CD8-positive, alpha-beta T cell (primary cell): ENCODE measurements at regions of chr10 and their contacts with region 1.

Region 1: GRCh38 chr10:102743588-102744373 is at the start of gene WBP1L:
- DNase-seq: peak; percentile 90 to 99 (median 95)
- ATAC-seq: peak; percentile 96
- H3K4me3 ChIP-seq: peak within 1 kb of the TSS; percentile 87 to 99
- H3K4me3 Mint-ChIP-seq: peak within 1 kb of the TSS; percentile 92
- H3K27ac ChIP-seq: peak within 1 kb of the TSS; percentile 64 to 91
- H3K27ac Mint-ChIP-seq: peak within 1 kb of the TSS; percentile 90
- H3K4me1 ChIP-seq: peaks cover 34% of the 10 kb centered on the region
- H3K4me1 Mint-ChIP-seq: peaks cover 50% of the 10 kb centered on the region
- H3K27me3 ChIP-seq: no peaks in the 10 kb centered on the region
- H3K27me3 Mint-ChIP-seq: no peaks in the 10 kb centered on the region
- CTCF ChIP-seq: no peak
- total RNA-seq, gene WBP1L: 5.5 to 5.9 TPM

Region 2: DNA sequence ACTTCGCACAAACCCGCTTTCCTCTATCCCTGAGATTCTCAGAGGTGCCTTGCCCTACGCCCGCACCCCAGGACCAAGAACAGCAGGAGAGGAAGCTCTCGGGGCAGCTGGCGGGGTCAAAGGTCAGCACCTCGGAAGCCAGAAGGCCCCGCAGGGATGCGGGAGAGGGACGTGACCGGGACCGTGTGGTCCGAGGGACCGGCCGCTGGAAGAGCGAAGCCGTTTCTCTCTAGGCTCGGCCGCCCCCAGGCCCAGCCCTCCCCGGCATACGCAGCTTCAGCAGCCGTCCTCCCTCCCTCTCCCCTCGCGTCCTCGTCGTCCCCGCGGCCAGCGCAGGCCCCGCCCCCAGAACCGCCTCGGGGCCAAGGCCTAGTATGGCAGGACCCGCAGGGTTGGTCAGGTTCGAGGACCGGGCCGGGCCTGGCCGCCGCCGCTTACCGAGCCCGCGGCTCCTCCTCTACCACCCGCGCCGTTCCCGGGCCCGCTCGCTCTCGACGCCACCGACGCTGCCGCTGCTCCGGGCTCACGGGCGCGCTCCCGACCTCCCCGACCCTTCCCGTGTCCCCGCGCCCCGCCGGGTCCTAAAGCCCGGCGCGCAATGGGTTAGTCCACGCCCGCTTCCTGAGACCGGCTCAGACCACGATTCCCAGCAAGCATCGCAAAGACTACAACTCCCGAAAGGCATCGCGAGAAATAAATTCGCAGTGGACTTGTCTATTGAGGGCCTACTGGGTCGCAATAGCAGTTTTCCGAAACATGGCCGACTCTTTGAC is 687.9 kb before region 1 on chr10 and contains the start of gene ARMH3:
- CTCF ChIA-PET with region 1: no interaction called
- POLR2A ChIA-PET with region 1: no interaction called
- intact Hi-C with region 1: loop called in 1 of 2 experiments (anchors 5 kb)
- DNase-seq: peak; percentile 75 to 95 (median 87)
- ATAC-seq: peak; percentile 93
- H3K4me3 ChIP-seq: peak within 1 kb of the TSS; percentile 93 to 94
- H3K4me3 Mint-ChIP-seq: peak within 1 kb of the TSS; percentile 97
- H3K27ac ChIP-seq: peak within 1 kb of the TSS; percentile 79 to 90
- H3K27ac Mint-ChIP-seq: peak within 1 kb of the TSS; percentile 95
- H3K4me1 ChIP-seq: peaks cover 40% of the 10 kb centered on the region
- H3K4me1 Mint-ChIP-seq: peaks cover 42% of the 10 kb centered on the region
- H3K27me3 ChIP-seq: no peaks in the 10 kb centered on the region
- H3K27me3 Mint-ChIP-seq: no peaks in the 10 kb centered on the region
- CTCF ChIP-seq: no peak
- total RNA-seq, gene ARMH3: 18.6 to 20.6 TPM

Region 3: GRCh38 chr10:102245101-102245931 is 498.5 kb before region 1 on chr10 and contains the start of gene GBF1:
- CTCF ChIA-PET with region 1: no interaction called
- POLR2A ChIA-PET with region 1: interaction called, 4 read pairs
- intact Hi-C with region 1: loop called in 1 of 2 experiments (anchors 10 kb)
- DNase-seq: peak; percentile 75 to 98 (median 87)
- ATAC-seq: peak; percentile 84
- H3K4me3 ChIP-seq: peak within 1 kb of the TSS; percentile 82 to 95
- H3K4me3 Mint-ChIP-seq: peak within 1 kb of the TSS; percentile 94
- H3K27ac ChIP-seq: peak within 1 kb of the TSS; percentile 89 to 93
- H3K27ac Mint-ChIP-seq: peak within 1 kb of the TSS; percentile 92
- H3K4me1 ChIP-seq: peaks cover 44% of the 10 kb centered on the region
- H3K4me1 Mint-ChIP-seq: peaks cover 54% of the 10 kb centered on the region
- H3K27me3 ChIP-seq: peaks cover 10 to 22% of the 10 kb centered on the region in 2 experiments
- H3K27me3 Mint-ChIP-seq: peaks cover 19% of the 10 kb centered on the region
- CTCF ChIP-seq: no peak
- total RNA-seq, gene GBF1: 26.7 to 31.3 TPM

Region 4: GRCh38 chr10:102660888-102661657 is 82.7 kb before region 1 on chr10:
- CTCF ChIA-PET with region 1: no interaction called
- POLR2A ChIA-PET with region 1: no interaction called
- intact Hi-C with region 1: no loop called
- DNase-seq: peak in 7 of 9 experiments; percentile 46 to 79 (median 60)
- ATAC-seq: peak; percentile 75
- H3K4me3 ChIP-seq: peak overlapping the region; percentile 40 to 41
- H3K4me3 Mint-ChIP-seq: peak overlapping the region; percentile 75
- H3K27ac ChIP-seq: peak overlapping the region; percentile 33 to 62
- H3K27ac Mint-ChIP-seq: peak overlapping the region; percentile 92
- H3K4me1 ChIP-seq: peaks cover 43% of the 10 kb centered on the region
- H3K4me1 Mint-ChIP-seq: peaks cover 40% of the 10 kb centered on the region
- H3K27me3 ChIP-seq: no peaks in the 10 kb centered on the region
- H3K27me3 Mint-ChIP-seq: no peaks in the 10 kb centered on the region
- CTCF ChIP-seq: no peak

Region 5: DNA sequence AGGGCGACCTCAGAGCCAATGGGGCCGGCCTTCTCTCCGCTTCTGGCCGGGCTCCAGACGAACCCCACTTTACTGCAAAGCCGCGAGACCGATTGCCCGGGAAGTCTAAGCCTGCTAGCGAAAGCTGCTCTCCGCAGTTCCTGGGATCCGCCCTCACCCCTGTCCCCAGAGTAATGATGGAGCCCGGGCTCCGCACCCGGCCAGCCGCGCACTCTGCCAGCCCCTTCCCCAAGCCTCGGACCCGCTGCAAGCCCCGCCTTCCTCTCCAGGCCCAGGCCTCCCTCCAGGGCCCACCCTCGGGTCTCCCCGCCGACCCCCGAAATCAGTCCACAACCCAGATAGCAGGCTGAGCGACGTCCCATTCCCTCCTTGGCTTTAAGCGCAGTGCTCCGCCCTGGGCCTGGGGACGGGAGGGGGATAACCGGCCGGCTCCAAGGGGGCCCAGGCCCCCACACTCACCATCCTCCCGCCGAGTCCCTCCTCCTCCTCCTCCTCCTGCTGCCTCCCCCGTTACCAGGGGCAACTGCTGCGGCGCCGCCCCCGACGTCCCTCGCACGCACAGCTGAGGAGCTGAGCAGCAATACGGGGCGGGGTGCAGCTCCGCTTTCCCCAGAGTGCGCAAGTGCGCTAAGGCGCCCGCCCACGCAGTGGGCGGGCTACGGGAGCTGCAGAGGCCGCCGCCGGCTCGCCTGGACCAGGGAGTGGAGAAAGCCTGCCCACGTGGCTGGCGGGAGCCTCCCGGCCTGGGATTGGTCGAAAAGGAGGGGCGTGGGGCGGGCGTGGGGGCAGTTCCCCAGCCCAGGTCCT is 29.8 kb before region 1 on chr10 and contains the start of gene ARL3:
- CTCF ChIA-PET with region 1: interaction called, 3 read pairs
- POLR2A ChIA-PET with region 1: interaction called, 24 read pairs
- intact Hi-C with region 1: loop called (anchors 1 kb)
- DNase-seq: peak; percentile 79 to 98 (median 94)
- ATAC-seq: peak; percentile 89
- H3K4me3 ChIP-seq: peak within 1 kb of the TSS; percentile 96 to 98
- H3K4me3 Mint-ChIP-seq: peak within 1 kb of the TSS; percentile 97
- H3K27ac ChIP-seq: peak within 1 kb of the TSS; percentile 84 to 91
- H3K27ac Mint-ChIP-seq: peak within 1 kb of the TSS; percentile 94
- H3K4me1 ChIP-seq: peaks cover 21% of the 10 kb centered on the region
- H3K4me1 Mint-ChIP-seq: peaks cover 59% of the 10 kb centered on the region
- H3K27me3 ChIP-seq: no peaks in the 10 kb centered on the region
- H3K27me3 Mint-ChIP-seq: no peaks in the 10 kb centered on the region
- CTCF ChIP-seq: peak; percentile 65
- total RNA-seq, gene ARL3: 0.49 to 0.75 TPM

Region 6: DNA sequence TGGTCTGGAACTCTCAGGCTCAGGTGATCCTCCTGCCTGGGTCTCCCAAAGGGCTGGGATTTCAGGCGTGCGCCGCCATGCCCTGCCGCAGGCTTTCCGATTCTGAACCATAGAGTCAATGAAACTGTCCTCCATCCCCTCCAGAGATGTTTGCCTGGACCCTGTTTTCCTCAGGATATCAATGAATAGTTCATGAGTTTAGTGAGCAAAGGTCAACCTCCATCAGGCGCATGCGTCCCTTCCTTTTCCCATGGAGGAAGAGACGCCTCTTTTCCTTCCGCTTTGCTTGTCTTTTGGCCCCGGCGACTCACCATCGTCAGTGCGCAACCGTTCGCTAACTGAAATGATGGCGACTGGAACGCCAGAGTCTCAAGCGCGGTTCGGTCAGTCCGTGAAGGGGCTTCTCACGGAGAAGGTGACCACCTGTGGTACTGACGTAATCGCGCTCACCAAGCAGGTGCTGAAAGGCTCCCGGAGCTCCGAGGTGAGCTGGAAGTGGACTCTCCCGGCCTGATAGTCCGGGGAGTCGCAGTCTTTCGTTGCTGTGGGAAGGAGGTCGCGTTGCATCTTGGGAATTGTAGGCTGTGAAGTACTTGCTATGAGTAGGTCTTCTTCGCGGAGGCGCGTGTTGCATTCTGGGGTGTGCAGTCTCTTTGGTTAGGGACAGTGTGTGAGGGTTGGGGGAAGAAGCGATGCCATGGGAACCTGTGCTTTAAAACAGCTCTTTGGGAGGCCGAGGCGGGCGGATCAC is 110.3 kb after region 1 on chr10 and contains the start of gene BORCS7:
- CTCF ChIA-PET with region 1: no interaction called
- POLR2A ChIA-PET with region 1: no interaction called
- intact Hi-C with region 1: loop called (anchors 1 kb)
- DNase-seq: peak; percentile 68 to 95 (median 87)
- ATAC-seq: peak; percentile 99
- H3K4me3 ChIP-seq: peak within 1 kb of the TSS; percentile 99
- H3K4me3 Mint-ChIP-seq: peak within 1 kb of the TSS; percentile 99
- H3K27ac ChIP-seq: peak within 1 kb of the TSS; percentile 90 to 98
- H3K27ac Mint-ChIP-seq: peak within 1 kb of the TSS; percentile 99
- H3K4me1 ChIP-seq: peaks cover 5% of the 10 kb centered on the region
- H3K4me1 Mint-ChIP-seq: peaks cover 17% of the 10 kb centered on the region
- H3K27me3 ChIP-seq: no peaks in the 10 kb centered on the region
- H3K27me3 Mint-ChIP-seq: no peaks in the 10 kb centered on the region
- CTCF ChIP-seq: no peak
- total RNA-seq, gene BORCS7: 13.7 to 13.9 TPM

Region 7: DNA sequence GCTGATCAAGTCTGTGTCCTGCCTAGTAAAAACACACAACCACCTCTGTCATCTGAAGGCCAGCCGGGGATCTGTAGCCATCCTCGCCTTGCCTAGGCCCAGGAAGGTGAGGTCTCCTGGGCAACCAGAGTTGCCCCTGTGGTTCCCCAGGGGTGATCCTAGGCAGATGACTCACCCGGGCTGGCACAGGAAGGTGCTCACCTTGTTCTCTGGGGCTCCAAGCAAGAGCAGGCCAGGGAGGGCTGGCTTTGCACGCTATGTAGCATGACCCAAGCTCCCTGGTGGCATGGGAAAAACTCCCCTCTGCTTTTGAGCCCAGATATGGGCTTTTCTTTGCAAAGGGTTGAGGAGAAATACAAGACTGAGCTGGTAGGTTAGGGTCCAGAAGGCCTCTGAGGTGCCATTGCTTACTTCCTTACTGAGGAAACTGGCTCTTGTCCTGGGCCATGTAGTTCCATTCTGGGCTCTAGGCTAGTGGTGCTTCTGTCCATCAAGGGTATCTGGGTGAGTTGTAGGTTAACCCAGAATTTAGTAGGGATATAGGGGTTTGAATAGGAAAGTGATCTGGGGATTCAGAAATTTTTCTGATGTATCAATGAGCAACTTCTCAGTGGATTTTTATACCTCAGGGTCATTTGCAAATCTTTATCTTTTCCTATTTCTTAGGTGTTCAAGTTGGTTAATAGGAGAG is 337.3 kb after region 1 on chr10:
- CTCF ChIA-PET with region 1: no interaction called
- POLR2A ChIA-PET with region 1: no interaction called
- intact Hi-C with region 1: no loop called
- DNase-seq: no peak
- ATAC-seq: no peak
- H3K4me3 ChIP-seq: no peak overlapping the region
- H3K4me3 Mint-ChIP-seq: no peak overlapping the region
- H3K27ac ChIP-seq: no peak overlapping the region
- H3K27ac Mint-ChIP-seq: peak overlapping the region; percentile 18
- H3K4me1 ChIP-seq: no peaks in the 10 kb centered on the region
- H3K4me1 Mint-ChIP-seq: no peaks in the 10 kb centered on the region
- H3K27me3 ChIP-seq: no peaks in the 10 kb centered on the region
- H3K27me3 Mint-ChIP-seq: no peaks in the 10 kb centered on the region
- CTCF ChIP-seq: no peak

Region 8: DNA sequence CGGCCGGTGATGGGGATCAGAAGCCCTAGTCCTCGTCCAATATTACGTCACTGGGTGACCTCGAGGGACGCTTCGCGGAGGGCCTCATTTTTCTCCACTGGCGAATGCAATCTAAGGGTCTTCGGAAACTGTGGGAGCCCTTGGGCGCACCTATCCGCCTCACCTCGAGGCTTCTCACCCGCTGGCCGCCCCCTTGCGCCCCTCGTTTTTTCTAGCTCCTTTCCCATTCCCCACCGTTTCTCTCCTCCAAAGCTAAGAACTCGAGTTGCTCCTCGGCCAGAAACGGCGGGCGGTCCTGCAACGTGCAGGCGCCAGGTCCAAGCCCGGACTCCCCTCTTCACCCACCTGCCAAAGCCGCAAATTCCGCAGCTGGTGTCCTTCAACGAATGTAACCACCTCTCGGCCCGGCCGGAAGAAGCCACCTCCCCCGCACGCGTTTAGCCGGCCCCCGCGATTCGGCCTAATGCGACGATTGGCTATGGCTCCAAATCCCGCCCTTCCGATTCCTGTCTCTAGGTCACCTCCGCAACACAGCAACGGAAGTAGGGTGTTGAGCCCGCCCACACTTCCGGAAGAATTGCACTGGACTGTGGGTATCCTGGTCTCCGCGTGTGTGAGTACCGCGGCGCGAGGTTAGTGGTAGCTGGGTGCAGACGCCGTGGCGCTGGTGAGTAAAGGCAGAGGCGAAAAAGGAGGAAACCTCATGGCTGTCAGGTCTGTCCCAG is 652.4 kb after region 1 on chr10 and contains the starts of genes ATP5MK and PDCD11:
- CTCF ChIA-PET with region 1: no interaction called
- POLR2A ChIA-PET with region 1: no interaction called
- intact Hi-C with region 1: loop called in 1 of 2 experiments (anchors 10 kb)
- DNase-seq: peak; percentile 86 to 97 (median 94)
- ATAC-seq: peak; percentile 97
- H3K4me3 ChIP-seq: peak within 1 kb of the TSS; percentile 88 to 99
- H3K4me3 Mint-ChIP-seq: peak within 1 kb of the TSS; percentile 97
- H3K27ac ChIP-seq: peak within 1 kb of the TSS; percentile 66 to 69
- H3K27ac Mint-ChIP-seq: peak within 1 kb of the TSS; percentile 96
- H3K4me1 ChIP-seq: peaks cover 39% of the 10 kb centered on the region
- H3K4me1 Mint-ChIP-seq: peaks cover 64% of the 10 kb centered on the region
- H3K27me3 ChIP-seq: no peaks in the 10 kb centered on the region
- H3K27me3 Mint-ChIP-seq: no peaks in the 10 kb centered on the region
- CTCF ChIP-seq: no peak
- total RNA-seq, gene ATP5MK: 93.4 to 97.3 TPM
- total RNA-seq, gene PDCD11: 13.7 to 15.0 TPM